SK-N-SH (cell line): ENCODE measurements at regions of chr6 and their contacts with region 1.

Region 1: GRCh38 chr6:25992413-25993037 is 29.9 kb downstream of the TRIM38 start:
- DNase-seq: peak; percentile 94
- H3K4me3 ChIP-seq: peak overlapping the region; percentile 53 to 78
- H3K27ac ChIP-seq: peak overlapping the region; percentile 89 to 98
- H3K4me1 ChIP-seq: peaks cover 6 to 8% of the 10 kb centered on the region in 2 experiments; a peak in 3 of 4 replicates
- H3K27me3 ChIP-seq: no peaks in the 10 kb centered on the region
- CTCF ChIP-seq: peak; percentile 96
- EP300 ChIP-seq: no peak
- RAD21 ChIP-seq: peak; percentile 60

Region 2: GRCh38 chr6:25968769-25969168 is 23.8 kb before region 1 on chr6:
- CTCF ChIA-PET with region 1: interaction called, 14 read pairs
- POLR2A ChIA-PET with region 1: no interaction called
- DNase-seq: no peak
- H3K4me3 ChIP-seq: no peak overlapping the region
- H3K27ac ChIP-seq: no peak overlapping the region
- H3K4me1 ChIP-seq: peaks cover 0 to 16% of the 10 kb centered on the region in 2 experiments; a peak in 2 of 4 replicates
- H3K27me3 ChIP-seq: no peaks in the 10 kb centered on the region
- CTCF ChIP-seq: no peak
- EP300 ChIP-seq: no peak
- RAD21 ChIP-seq: no peak

Region 3: DNA sequence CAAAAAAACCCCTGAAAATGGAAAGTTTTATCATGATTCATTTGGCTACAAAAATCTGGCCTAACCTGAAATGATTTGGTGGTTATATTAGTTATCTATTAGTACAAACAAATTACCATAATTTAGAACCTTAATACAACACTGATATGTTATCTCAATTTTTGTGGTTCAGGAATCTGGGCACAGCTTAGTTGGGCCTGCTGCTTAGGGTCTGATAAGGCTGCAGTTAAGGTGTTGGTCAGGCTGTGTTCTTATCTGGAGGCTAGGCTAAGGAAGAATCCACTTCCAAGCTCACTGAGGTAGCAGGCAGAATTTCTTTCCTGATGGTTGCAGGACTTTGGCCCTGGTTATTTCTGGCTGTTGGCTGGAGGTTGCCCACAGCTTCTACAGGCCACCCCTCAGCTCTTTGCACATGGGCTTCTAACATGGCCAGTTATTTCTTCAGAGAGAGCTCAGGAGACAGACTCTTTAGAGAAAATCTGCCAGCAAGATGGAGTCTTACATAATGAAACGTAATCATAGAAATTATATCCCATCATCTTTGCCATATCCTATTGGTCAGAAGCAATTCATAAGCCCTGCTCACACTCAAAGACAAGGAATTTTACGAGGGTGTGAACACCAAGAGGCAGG is 18.5 kb before region 1 on chr6:
- CTCF ChIA-PET with region 1: interaction called, 14 read pairs
- POLR2A ChIA-PET with region 1: no interaction called
- DNase-seq: no peak
- H3K4me3 ChIP-seq: no peak overlapping the region
- H3K27ac ChIP-seq: no peak overlapping the region
- H3K4me1 ChIP-seq: peaks cover 0 to 16% of the 10 kb centered on the region in 2 experiments; a peak in 2 of 4 replicates
- H3K27me3 ChIP-seq: no peaks in the 10 kb centered on the region
- CTCF ChIP-seq: no peak
- EP300 ChIP-seq: no peak
- RAD21 ChIP-seq: no peak

Region 4: DNA sequence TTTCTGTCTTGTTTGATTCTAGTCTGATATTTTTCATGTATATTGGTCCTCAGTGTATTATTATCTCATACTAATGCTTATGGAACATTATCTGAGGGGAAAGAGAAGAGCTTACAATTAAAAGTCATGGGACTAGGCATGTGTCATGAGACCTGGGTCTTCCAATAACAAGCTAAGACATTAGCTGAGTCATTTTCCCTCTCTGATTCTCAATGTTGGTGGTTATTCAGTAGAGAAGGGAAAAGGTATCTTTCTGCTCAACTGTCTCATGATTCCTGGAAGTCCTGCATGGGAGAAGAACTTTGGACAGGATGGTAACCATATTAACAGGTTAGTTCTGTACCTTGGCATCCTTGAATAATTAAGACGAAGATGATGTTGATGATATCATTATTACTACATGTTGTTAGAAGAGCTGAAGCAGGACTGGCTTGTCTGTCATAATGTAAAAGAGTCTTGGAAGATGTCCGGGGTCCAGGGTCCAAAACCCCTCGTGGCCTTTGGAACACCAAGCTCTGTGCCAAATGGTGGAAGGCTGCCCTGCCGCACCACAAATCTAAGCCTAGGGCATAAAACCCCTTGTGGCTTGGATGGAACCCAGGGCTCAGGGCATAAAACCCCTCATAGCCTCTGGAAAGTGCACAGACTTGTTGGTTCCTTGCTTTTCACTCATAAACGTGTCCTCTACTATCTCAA is 10.8 kb before region 1 on chr6:
- CTCF ChIA-PET with region 1: interaction called, 23 read pairs
- POLR2A ChIA-PET with region 1: interaction called, 4 read pairs
- DNase-seq: no peak
- H3K4me3 ChIP-seq: no peak overlapping the region
- H3K27ac ChIP-seq: no peak overlapping the region
- H3K4me1 ChIP-seq: no peaks in the 10 kb centered on the region
- H3K27me3 ChIP-seq: no peaks in the 10 kb centered on the region
- CTCF ChIP-seq: no peak
- EP300 ChIP-seq: no peak
- RAD21 ChIP-seq: no peak

Region 5: GRCh38 chr6:26003102-26003694 is 10.7 kb after region 1 on chr6:
- CTCF ChIA-PET with region 1: interaction called, 104 read pairs
- POLR2A ChIA-PET with region 1: interaction called, 7 read pairs
- DNase-seq: peak; percentile 72
- H3K4me3 ChIP-seq: no peak overlapping the region
- H3K27ac ChIP-seq: no peak overlapping the region
- H3K4me1 ChIP-seq: no peaks in the 10 kb centered on the region; a peak in 1 of 4 replicates
- H3K27me3 ChIP-seq: no peaks in the 10 kb centered on the region
- CTCF ChIP-seq: peak; percentile 85
- EP300 ChIP-seq: no peak
- RAD21 ChIP-seq: peak; percentile 72

Region 6: GRCh38 chr6:26008470-26008869 is 15.9 kb after region 1 on chr6:
- CTCF ChIA-PET with region 1: interaction called, 104 read pairs
- POLR2A ChIA-PET with region 1: interaction called, 7 read pairs
- DNase-seq: no peak
- H3K4me3 ChIP-seq: no peak overlapping the region
- H3K27ac ChIP-seq: no peak overlapping the region
- H3K4me1 ChIP-seq: no peaks in the 10 kb centered on the region; a peak in 2 of 4 replicates
- H3K27me3 ChIP-seq: no peaks in the 10 kb centered on the region
- CTCF ChIP-seq: no peak
- EP300 ChIP-seq: no peak
- RAD21 ChIP-seq: no peak

Region 7: DNA sequence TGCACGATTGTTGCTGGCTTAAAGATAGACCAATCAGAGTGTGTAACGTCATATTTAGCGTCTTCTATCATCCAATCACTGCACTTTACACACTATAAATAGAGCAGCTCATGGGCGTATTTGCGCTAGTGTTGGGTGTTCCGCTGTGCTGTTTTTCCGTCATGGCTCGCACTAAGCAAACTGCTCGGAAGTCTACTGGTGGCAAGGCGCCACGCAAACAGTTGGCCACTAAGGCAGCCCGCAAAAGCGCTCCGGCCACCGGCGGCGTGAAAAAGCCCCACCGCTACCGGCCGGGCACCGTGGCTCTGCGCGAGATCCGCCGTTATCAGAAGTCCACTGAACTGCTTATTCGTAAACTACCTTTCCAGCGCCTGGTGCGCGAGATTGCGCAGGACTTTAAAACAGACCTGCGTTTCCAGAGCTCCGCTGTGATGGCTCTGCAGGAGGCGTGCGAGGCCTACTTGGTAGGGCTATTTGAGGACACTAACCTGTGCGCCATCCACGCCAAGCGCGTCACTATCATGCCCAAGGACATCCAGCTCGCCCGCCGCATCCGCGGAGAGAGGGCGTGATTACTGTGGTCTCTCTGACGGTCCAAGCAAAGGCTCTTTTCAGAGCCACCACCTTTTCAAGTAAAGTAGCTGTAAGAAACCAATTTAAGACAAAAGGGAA is 27.9 kb after region 1 on chr6:
- CTCF ChIA-PET with region 1: interaction called, 31 read pairs
- POLR2A ChIA-PET with region 1: interaction called, 67 read pairs
- DNase-seq: peak; percentile 87
- H3K4me3 ChIP-seq: peak overlapping the region; percentile 78 to 84
- H3K27ac ChIP-seq: peak overlapping the region; percentile 93 to 99
- H3K4me1 ChIP-seq: peaks cover 0 to 19% of the 10 kb centered on the region in 2 experiments; a peak in 2 of 4 replicates
- H3K27me3 ChIP-seq: no peaks in the 10 kb centered on the region
- CTCF ChIP-seq: no peak
- EP300 ChIP-seq: no peak
- RAD21 ChIP-seq: no peak